ENCODE measurements at regions of chr2 and their contacts with region 1.

Region 1: DNA sequence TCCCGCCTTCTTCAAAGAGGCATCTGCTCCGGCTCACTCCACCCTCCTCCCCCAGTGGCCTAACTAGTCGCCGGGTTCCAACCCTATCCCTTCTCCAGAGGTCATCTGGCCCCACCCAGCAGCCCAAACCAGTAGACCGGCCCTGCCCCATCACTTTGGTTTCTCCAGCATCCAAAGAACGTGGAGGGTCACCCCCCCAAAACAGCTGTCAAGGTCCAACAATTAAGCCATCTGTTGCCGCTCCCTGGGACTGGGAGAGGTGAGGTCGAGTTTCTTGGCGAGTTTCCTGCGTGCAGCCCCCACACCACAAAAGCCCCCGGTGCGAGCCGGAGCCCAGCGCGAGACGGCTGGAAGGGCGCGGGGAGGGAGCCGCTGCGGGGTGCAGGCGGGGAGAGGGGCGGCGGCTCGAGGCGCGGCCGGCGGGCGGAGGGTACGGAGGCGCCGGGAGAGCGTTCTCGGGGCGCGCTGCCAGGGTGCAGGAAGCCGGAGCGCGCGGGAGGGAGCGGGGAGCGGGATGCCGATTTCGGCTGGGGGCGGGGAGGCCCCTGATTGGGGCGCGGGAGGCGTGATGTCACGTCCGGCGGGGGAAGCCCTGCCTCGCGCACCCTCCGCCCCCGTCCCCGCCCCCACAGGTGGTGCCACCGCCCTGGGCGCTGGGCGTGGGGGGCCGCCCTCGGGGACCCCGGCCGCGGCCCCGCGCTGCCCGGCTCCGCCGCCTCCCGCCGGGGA is 571 bp upstream of the GPC1 start:
- DNase-seq: no peak
- ATAC-seq: peak; percentile 69
- H3K4me3 ChIP-seq: peak overlapping the region; percentile 64; the same call in 1 of the 2 replicates
- H3K27ac ChIP-seq: no peak overlapping the region
- H3K4me1 ChIP-seq: no peaks in the 10 kb centered on the region
- H3K27me3 ChIP-seq: peaks cover 7 to 17% of the 10 kb centered on the region in 2 experiments
- CTCF ChIP-seq: no peak
- EP300 ChIP-seq: no peak
- POLR2A ChIP-seq: peak; percentile 37; the same call in 1 of the 2 replicates
- RAD21 ChIP-seq: no peak

Region 2: DNA sequence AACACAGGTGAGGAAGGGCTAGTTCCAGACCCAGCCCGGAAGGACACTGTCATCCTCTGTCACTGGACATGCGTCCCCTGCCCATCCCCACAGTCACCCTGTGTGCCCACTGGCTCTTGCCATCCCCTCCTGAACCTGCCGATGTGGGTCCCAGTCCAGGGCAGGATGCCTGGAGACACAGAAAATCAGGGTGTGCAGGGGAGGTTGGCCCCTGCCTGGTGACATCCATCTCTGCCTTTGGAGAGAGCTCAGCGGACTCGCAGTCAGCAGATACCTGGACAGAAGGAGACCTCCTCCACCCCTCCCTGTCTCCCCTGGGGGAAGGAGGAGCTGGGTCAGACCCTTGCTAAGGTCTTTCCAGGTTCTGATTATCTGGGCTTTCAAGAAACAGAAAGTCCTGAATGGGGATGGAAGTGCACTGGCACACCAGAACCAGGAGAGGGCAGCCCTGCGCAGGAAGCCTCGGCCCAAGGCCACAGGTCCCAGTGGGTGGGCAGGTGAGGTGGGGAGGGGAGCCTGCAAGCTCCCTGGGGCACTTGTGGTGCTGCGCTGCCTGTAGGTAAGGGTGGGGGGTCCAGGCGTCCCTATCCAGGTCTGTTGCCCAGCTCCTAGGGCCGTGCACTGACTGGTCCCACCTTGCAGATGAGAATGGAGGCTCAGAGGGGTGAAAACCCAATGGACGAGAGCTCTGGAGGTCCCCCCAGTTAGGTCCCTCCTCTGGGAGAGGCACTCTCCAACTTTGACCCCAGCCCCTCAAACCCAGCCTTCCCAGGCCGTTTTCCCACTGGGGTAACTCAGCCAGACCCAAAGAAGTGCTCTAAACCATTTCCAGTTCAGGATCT is 284.7 kb before region 1 on chr2:
- CTCF ChIA-PET with region 1: no interaction called
- POLR2A ChIA-PET with region 1: no interaction called
- RAD21 ChIA-PET with region 1: no interaction called
- SMC1A ChIA-PET with region 1: no interaction called
- in situ Hi-C with region 1: no loop called
- intact Hi-C with region 1: loop called (anchors 1 kb)
- DNase-seq: no peak
- ATAC-seq: peak; percentile 87
- H3K4me3 ChIP-seq: no peak overlapping the region
- H3K27ac ChIP-seq: no peak overlapping the region
- H3K4me1 ChIP-seq: no peaks in the 10 kb centered on the region
- H3K27me3 ChIP-seq: no peaks in the 10 kb centered on the region
- CTCF ChIP-seq: peak; percentile 67 to 83 (median 69)
- EP300 ChIP-seq: no peak
- POLR2A ChIP-seq: no peak
- RAD21 ChIP-seq: peak; percentile 72

Region 3: GRCh38 chr2:240232961-240233893 is 201.7 kb before region 1 on chr2:
- CTCF ChIA-PET with region 1: interaction called, 3 read pairs
- POLR2A ChIA-PET with region 1: no interaction called
- RAD21 ChIA-PET with region 1: no interaction called
- SMC1A ChIA-PET with region 1: no interaction called
- in situ Hi-C with region 1: no loop called
- intact Hi-C with region 1: loop called (anchors 5 kb)
- DNase-seq: no peak
- ATAC-seq: peak; percentile 69
- H3K4me3 ChIP-seq: no peak overlapping the region
- H3K27ac ChIP-seq: no peak overlapping the region
- H3K4me1 ChIP-seq: no peaks in the 10 kb centered on the region
- H3K27me3 ChIP-seq: no peaks in the 10 kb centered on the region
- CTCF ChIP-seq: peak; percentile 35 to 46 (median 36); a peak in 5 of 6 replicates
- EP300 ChIP-seq: no peak
- POLR2A ChIP-seq: no peak
- RAD21 ChIP-seq: peak; percentile 50

Region 4: GRCh38 chr2:240452457-240453256 is 17.8 kb after region 1 on chr2:
- CTCF ChIA-PET with region 1: no interaction called
- POLR2A ChIA-PET with region 1: no interaction called
- RAD21 ChIA-PET with region 1: no interaction called
- SMC1A ChIA-PET with region 1: no interaction called
- in situ Hi-C with region 1: no loop called
- intact Hi-C with region 1: no loop called
- DNase-seq: no peak
- ATAC-seq: peak; percentile 30; the same call in 2 of the 3 replicates
- H3K4me3 ChIP-seq: no peak overlapping the region
- H3K27ac ChIP-seq: no peak overlapping the region
- H3K4me1 ChIP-seq: no peaks in the 10 kb centered on the region
- H3K27me3 ChIP-seq: peaks cover 11 to 12% of the 10 kb centered on the region in 2 experiments
- CTCF ChIP-seq: no peak
- EP300 ChIP-seq: no peak
- POLR2A ChIP-seq: no peak
- RAD21 ChIP-seq: no peak